Panc1 (cell line): ENCODE measurements at regions of chr7 and their contacts with region 1.

Region 1: DNA sequence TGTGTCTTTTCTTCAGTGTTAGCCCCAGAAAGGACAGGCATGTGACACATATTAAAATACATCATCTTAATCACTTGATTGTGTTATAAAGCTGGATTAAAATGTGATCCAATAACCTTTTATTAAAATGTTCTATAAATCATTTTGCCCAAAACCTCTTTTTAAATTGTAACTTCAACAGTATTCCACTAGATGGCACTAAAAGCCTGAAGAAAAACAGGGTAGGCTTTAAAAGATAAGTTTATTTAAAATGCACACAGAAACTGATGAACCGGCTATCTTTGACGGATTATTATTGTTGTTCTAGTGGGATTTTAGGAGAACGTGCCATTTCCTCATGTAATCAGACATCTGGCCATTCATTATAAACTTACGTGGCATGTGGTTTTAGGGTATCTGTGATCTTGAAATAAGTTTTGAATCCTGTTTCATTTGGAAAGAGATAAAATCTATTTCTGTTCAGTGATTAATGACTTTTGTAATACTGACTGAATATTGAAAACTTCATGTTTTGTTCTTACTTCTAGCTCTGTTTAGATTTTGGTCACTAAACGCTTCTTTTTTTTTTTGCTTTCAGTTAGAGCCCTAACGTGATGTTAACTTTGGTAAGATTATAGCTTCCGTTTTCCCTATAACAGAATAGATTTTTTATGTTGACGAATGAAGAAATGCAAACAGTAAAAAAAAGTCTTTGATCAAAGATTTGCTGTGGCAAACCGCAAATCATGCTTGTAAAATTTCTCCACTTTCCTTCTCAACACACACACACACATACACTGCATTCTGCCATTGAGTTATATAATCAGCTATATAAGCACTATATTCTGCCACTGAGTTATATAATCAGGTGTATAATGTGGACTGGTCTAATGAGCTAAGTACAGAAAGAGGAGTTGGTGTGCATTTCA is 13.6 kb downstream of the VPS50 start:
- DNase-seq: no peak
- ATAC-seq: no peak
- H3K4me3 ChIP-seq: no peak overlapping the region
- H3K27ac ChIP-seq: no peak overlapping the region
- H3K4me1 ChIP-seq: no peaks in the 10 kb centered on the region
- H3K27me3 ChIP-seq: no peaks in the 10 kb centered on the region
- CTCF ChIP-seq: peak; percentile 61; the same call in 1 of the 2 replicates

Region 2: GRCh38 chr7:91240376-91240948 is 2005.3 kb before region 1 on chr7:
- CTCF ChIA-PET with region 1: no interaction called
- POLR2A ChIA-PET with region 1: interaction called, 10 read pairs
- in situ Hi-C with region 1: no loop called
- intact Hi-C with region 1: no loop called
- DNase-seq: no peak
- ATAC-seq: no peak
- H3K4me3 ChIP-seq: no peak overlapping the region
- H3K27ac ChIP-seq: no peak overlapping the region
- H3K4me1 ChIP-seq: no peaks in the 10 kb centered on the region
- H3K27me3 ChIP-seq: 0 out of 2 replicates have a peak, but pooled peaks cover 2% of the 10 kb centered on the region
- CTCF ChIP-seq: no peak

Region 3: GRCh38 chr7:93374345-93374940 is 128.7 kb after region 1 on chr7:
- CTCF ChIA-PET with region 1: interaction called, 3 read pairs
- POLR2A ChIA-PET with region 1: no interaction called
- in situ Hi-C with region 1: no loop called
- intact Hi-C with region 1: loop called (anchors 10 kb)
- DNase-seq: peak; percentile 42
- ATAC-seq: no peak
- H3K4me3 ChIP-seq: no peak overlapping the region
- H3K27ac ChIP-seq: no peak overlapping the region
- H3K4me1 ChIP-seq: no peaks in the 10 kb centered on the region
- H3K27me3 ChIP-seq: peaks cover 4% of the 10 kb centered on the region; the same call in 1 of the 2 replicates
- CTCF ChIP-seq: peak; percentile 83; the same call in 1 of the 2 replicates

Region 4: DNA sequence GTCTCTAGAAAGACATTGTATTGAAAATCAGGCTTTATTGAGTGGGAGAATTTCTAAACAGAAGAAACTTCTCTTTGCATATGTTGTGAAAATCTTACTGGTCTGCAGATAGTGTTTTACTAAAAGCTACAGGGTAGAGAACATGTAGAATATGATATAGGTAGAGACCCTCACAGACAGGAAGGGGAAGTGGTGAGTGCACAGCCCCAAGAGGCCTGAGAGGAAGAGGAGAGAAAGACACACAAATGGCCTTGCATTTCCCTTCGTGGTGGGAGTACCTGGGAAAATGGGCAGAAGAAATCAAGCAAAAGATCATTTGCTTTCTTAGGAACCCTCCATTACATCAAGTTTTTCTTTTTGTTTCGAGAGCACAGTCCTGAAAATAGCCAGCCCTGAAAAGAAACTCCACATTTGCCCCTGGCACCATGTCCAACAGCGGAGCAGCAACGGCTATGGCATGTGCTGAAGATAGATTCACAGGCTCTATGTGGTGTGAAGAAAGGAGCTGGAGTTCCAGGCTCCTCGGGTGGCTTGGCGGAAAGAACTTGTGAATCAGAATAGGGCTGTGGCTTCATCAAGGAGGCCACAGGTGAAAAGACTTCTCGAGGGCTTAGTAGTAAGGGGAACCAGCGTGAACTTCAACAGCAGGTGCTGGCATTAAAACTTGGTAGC is 185.3 kb after region 1 on chr7:
- CTCF ChIA-PET with region 1: interaction called, 4 read pairs
- POLR2A ChIA-PET with region 1: no interaction called
- in situ Hi-C with region 1: no loop called
- intact Hi-C with region 1: loop called (anchors 10 kb)
- DNase-seq: no peak
- ATAC-seq: no peak
- H3K4me3 ChIP-seq: no peak overlapping the region
- H3K27ac ChIP-seq: no peak overlapping the region
- H3K4me1 ChIP-seq: no peaks in the 10 kb centered on the region
- H3K27me3 ChIP-seq: no peaks in the 10 kb centered on the region
- CTCF ChIP-seq: no peak

Region 5: DNA sequence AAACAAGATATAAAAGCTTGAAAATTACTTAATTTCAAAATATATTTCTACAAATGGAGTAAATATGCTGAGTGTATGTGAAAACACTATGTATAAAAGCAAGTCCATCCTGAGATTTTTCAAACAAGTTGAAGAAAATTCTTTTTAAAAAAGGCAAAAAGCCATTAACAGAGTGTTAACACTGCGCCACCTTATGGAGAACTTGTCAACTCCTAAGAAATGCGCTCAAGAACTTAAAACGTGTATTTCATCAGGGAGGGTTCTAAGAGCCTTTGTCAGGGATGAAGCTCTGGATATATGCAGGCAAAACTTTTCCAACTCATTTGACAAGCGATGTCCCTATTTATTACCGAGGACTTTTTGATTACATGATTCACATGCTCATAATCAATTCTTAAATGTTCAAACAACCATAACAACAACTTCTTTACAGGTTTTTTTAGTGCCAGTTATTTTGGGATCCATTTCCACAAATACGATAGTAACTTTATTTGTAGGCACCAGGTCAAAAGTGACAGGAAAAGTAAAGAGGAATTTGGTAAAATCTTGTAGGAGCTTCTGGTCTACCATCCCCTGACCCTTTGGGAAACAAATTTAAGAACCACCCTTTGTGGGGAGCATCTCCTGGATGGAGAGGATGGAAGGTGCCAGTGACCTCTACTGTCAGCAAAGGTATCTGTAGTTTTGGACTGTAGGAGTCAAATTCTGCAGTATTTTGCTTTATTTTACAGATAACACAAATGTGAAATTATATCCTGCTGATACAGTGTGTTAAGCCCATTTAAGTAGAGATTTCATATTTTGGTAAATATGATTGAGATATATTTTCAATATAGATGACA is 305.5 kb after region 1 on chr7:
- CTCF ChIA-PET with region 1: no interaction called
- POLR2A ChIA-PET with region 1: no interaction called
- in situ Hi-C with region 1: no loop called
- intact Hi-C with region 1: loop called (anchors 2 kb)
- DNase-seq: peak; percentile 20
- ATAC-seq: peak; percentile 75
- H3K4me3 ChIP-seq: no peak overlapping the region
- H3K27ac ChIP-seq: no peak overlapping the region
- H3K4me1 ChIP-seq: no peaks in the 10 kb centered on the region
- H3K27me3 ChIP-seq: no peaks in the 10 kb centered on the region; the same call in 1 of the 2 replicates
- CTCF ChIP-seq: peak; percentile 62; the same call in 1 of the 2 replicates

Region 6: DNA sequence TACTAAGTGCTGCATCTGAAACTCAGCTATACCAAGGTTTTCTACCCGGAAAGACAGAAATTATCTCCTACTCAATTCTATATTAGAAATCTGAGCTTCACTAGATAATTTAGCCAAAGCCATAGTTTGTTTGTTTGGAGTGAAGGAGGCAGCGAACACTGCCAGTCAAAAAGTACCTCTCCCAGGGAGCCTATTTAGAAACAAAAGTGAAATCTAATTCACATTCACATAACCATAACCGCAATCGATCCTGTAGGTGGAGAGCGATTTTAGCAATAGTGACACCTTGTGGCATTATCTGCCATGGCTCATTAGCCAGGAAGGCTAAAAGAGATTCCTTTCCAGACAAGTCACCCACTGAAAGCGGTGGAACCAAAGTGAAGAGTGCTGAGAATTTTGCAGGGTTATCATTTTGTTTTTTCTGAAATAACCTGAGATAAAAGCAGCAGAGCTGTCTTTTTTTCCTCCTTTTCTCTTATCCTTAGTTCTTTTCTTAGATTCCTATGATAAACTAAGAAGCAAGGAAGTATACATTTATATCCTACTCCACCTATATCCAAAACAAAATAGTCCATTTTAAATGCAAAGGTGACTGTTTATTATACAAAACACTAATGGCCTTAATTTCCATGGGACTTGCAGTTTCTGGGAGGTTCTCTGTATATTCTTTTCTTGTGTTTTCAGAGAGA is 842.0 kb after region 1 on chr7:
- CTCF ChIA-PET with region 1: no interaction called
- POLR2A ChIA-PET with region 1: no interaction called
- in situ Hi-C with region 1: no loop called
- intact Hi-C with region 1: loop called (anchors 10 kb)
- DNase-seq: peak; percentile 54
- ATAC-seq: peak; percentile 84
- H3K4me3 ChIP-seq: peak overlapping the region in 1 of 2 experiments; percentile 23; a peak in 2 of 4 replicates
- H3K27ac ChIP-seq: no peak overlapping the region
- H3K4me1 ChIP-seq: no peaks in the 10 kb centered on the region
- H3K27me3 ChIP-seq: peaks cover 3% of the 10 kb centered on the region
- CTCF ChIP-seq: peak; percentile 81